B cell (primary cell): ENCODE measurements at regions of chr14 and their contacts with region 1.

Region 1: GRCh38 chr14:24425704-24426103 is 3.8 kb downstream of the CBLN3 start:
- DNase-seq: no peak
- ATAC-seq: no peak
- H3K4me3 ChIP-seq: no peak overlapping the region
- H3K4me3 Mint-ChIP-seq: no peak overlapping the region
- H3K27ac ChIP-seq: no peak overlapping the region
- H3K27ac Mint-ChIP-seq: no peak overlapping the region
- H3K4me1 ChIP-seq: peaks cover 16 to 30% of the 10 kb centered on the region in 2 donors
- H3K4me1 Mint-ChIP-seq: peaks cover 13% of the 10 kb centered on the region
- H3K27me3 ChIP-seq: peaks cover 0 to 3% (median 0%) of the 10 kb centered on the region in 4 experiments
- H3K27me3 Mint-ChIP-seq: peaks cover 5% of the 10 kb centered on the region
- CTCF ChIP-seq: no peak

Region 2: DNA sequence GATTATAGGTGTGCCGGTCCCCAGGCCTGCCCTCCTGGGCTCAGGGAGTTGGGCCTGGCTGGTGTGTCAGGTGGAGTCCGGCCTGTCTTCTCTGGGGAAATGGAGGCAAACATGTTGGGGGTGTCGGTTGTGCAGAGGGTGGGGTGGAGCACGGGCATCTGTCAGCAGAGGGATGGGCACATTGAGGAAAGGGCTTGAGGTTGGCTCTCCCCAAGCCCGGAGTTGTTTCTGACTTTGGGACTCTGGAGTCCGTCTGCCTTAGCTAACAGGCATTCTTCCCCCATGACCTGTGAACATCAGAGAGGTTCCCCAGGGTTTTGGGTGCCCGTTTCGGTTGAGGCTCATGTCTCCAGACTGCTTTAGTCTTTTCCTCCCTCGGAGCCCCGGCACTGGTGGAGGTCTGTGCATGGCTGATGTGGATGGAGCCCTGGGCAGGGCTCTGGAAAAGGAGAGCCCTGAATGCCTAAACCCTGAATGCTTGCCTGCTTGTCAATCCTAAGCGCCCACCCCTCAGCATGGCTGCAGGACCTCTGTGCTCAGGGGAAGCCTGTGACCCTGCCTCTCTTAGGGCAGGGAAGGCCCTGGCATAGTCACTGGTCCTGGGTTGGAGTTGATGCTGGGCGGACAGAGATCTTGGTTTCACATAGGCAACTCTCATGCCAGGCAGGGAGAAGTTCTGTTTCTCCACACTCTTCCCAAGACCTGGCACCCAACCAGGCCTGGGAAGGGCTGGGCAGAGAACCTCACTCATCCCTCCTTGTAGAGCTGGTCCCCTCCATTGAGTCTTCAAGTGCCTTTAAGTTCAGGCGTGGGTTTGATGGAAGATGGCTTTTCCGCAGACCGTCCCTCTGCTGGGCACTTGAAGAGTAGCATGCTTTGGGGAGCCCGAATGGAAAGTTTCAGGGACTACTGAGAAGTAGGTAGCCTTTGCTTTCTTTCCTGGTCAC is 14.0 kb before region 1 on chr14:
- CTCF ChIA-PET with region 1: interaction called, 21 read pairs
- POLR2A ChIA-PET with region 1: no interaction called
- intact Hi-C with region 1: loop called (anchors 2 kb)
- DNase-seq: peak; percentile 67
- ATAC-seq: peak; percentile 87
- H3K4me3 ChIP-seq: no peak overlapping the region
- H3K4me3 Mint-ChIP-seq: no peak overlapping the region
- H3K27ac ChIP-seq: no peak overlapping the region
- H3K27ac Mint-ChIP-seq: no peak overlapping the region
- H3K4me1 ChIP-seq: no peaks in the 10 kb centered on the region
- H3K4me1 Mint-ChIP-seq: no peaks in the 10 kb centered on the region
- H3K27me3 ChIP-seq: peaks cover 0 to 18% (median 4%) of the 10 kb centered on the region in 4 experiments
- H3K27me3 Mint-ChIP-seq: peaks cover 14% of the 10 kb centered on the region
- CTCF ChIP-seq: peak; percentile 72